ENCODE measurements at regions of chr2 and their contacts with region 1.

Region 1: DNA sequence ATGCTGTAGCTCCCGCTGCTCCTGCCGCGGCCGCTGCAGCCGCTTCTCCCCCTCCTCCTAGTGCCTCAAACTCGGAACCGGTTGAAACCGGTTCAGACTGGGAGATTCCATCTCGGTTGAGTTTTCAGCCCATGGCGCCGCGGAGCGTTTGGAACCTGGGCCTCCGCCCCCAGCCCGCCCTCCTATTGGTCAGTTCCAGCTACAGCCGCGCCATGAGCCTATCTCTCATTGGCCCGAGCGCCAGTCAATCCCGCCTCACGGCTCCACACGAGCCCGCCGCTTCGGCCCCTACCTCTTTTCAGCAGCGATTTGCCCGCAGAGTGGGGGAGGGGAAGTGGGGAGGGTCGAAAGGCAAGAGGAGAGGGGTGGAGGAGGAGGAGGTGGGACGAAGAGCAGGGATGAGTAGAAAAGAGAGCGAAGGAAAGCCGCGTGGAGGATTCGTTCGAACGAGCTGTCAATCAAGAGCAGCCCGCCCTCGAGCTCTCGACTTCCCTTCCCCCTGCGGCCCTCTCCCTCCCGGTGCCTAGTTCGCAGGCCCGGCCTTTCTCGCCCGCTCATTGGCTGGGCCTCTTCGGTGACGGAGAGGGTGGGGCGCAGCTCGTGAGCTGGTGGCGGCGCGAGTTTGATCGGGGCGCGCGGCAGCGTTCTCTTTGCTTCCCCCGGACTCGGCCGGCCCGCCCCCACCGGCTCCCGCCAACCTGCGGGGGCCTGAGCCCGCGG is at the start of gene XPO1:
- DNase-seq: peak; percentile 95 to 100 (median 99)
- ATAC-seq: peak; percentile 89
- H3K4me3 ChIP-seq: peak within 1 kb of the TSS; percentile 96
- H3K4me3 Mint-ChIP-seq: peak within 1 kb of the TSS; percentile 89 to 100 (median 98)
- H3K27ac ChIP-seq: peak within 1 kb of the TSS; percentile 98
- H3K27ac Mint-ChIP-seq: peak within 1 kb of the TSS; percentile 94 to 100 (median 99)
- H3K4me1 ChIP-seq: peaks cover 19 to 24% of the 10 kb centered on the region in 2 donors
- H3K4me1 Mint-ChIP-seq: peaks cover 24 to 43% (median 35%) of the 10 kb centered on the region in 7 donors
- H3K27me3 ChIP-seq: no peaks in the 10 kb centered on the region
- H3K27me3 Mint-ChIP-seq: peaks cover 0 to 8% (median 0%) of the 10 kb centered on the region in 5 donors
- total RNA-seq, gene XPO1: 132 to 192 (median 181) TPM

Region 2: DNA sequence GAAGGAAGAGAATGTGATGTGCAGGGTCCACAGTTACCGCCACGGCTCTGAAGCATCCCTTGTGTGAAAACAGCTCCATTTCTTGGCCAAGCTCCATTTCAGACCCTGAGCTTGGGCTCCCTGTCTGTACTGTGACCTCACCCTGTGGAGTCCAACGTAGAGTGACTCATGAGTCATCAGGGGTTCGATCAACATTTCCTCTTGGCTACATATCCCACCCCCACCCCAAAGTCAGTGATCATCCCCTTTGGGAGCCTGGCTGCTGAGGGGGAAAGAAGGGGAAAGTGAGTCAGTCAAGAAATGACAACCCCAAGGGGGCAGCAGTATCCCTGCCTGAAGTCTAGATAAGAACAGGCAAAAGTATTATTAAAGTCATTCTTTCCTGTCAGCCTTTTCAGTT is 720.1 kb before region 1 on chr2:
- CTCF ChIA-PET with region 1: no interaction called
- POLR2A ChIA-PET with region 1: no interaction called
- intact Hi-C with region 1: loop called in 1 of 2 experiments (anchors 1 kb)
- DNase-seq: peak in 2 of 9 donors; percentile 29 to 53
- ATAC-seq: no peak
- H3K4me3 ChIP-seq: no peak overlapping the region
- H3K4me3 Mint-ChIP-seq: peak overlapping the region in 2 of 10 donors; percentile 5 to 34
- H3K27ac ChIP-seq: no peak overlapping the region
- H3K27ac Mint-ChIP-seq: peak overlapping the region in 7 of 9 donors; percentile 28 to 92 (median 61)
- H3K4me1 ChIP-seq: peaks cover 24% of the 10 kb centered on the region in 2 donors
- H3K4me1 Mint-ChIP-seq: peaks cover 22 to 46% (median 37%) of the 10 kb centered on the region in 7 donors
- H3K27me3 ChIP-seq: no peaks in the 10 kb centered on the region
- H3K27me3 Mint-ChIP-seq: peaks cover 0 to 3% (median 0%) of the 10 kb centered on the region in 5 donors

Region 3: GRCh38 chr2:61144697-61145268 is 393.6 kb before region 1 on chr2:
- CTCF ChIA-PET with region 1: no interaction called
- POLR2A ChIA-PET with region 1: interaction called, 5 read pairs
- intact Hi-C with region 1: loop called in 1 of 2 experiments (anchors 2 kb)
- DNase-seq: peak; percentile 74 to 90 (median 86)
- ATAC-seq: peak; percentile 92
- H3K4me3 ChIP-seq: peak overlapping the region; percentile 82
- H3K4me3 Mint-ChIP-seq: peak overlapping the region; percentile 88 to 98 (median 94)
- H3K27ac ChIP-seq: peak overlapping the region; percentile 73
- H3K27ac Mint-ChIP-seq: peak overlapping the region; percentile 90 to 98 (median 95)
- H3K4me1 ChIP-seq: peaks cover 4 to 5% of the 10 kb centered on the region in 2 donors
- H3K4me1 Mint-ChIP-seq: peaks cover 0 to 18% (median 7%) of the 10 kb centered on the region in 7 donors
- H3K27me3 ChIP-seq: no peaks in the 10 kb centered on the region
- H3K27me3 Mint-ChIP-seq: peaks cover 0 to 2% (median 0%) of the 10 kb centered on the region in 5 donors

Region 4: GRCh38 chr2:61318553-61318952 is 219.8 kb before region 1 on chr2:
- CTCF ChIA-PET with region 1: no interaction called
- POLR2A ChIA-PET with region 1: no interaction called
- intact Hi-C with region 1: no loop called
- DNase-seq: no peak
- ATAC-seq: no peak
- H3K4me3 ChIP-seq: no peak overlapping the region
- H3K4me3 Mint-ChIP-seq: no peak overlapping the region
- H3K27ac ChIP-seq: no peak overlapping the region
- H3K27ac Mint-ChIP-seq: no peak overlapping the region
- H3K4me1 ChIP-seq: no peaks in the 10 kb centered on the region
- H3K4me1 Mint-ChIP-seq: peaks cover 0 to 4% (median 0%) of the 10 kb centered on the region in 7 donors
- H3K27me3 ChIP-seq: no peaks in the 10 kb centered on the region
- H3K27me3 Mint-ChIP-seq: no peaks in the 10 kb centered on the region

Region 5: DNA sequence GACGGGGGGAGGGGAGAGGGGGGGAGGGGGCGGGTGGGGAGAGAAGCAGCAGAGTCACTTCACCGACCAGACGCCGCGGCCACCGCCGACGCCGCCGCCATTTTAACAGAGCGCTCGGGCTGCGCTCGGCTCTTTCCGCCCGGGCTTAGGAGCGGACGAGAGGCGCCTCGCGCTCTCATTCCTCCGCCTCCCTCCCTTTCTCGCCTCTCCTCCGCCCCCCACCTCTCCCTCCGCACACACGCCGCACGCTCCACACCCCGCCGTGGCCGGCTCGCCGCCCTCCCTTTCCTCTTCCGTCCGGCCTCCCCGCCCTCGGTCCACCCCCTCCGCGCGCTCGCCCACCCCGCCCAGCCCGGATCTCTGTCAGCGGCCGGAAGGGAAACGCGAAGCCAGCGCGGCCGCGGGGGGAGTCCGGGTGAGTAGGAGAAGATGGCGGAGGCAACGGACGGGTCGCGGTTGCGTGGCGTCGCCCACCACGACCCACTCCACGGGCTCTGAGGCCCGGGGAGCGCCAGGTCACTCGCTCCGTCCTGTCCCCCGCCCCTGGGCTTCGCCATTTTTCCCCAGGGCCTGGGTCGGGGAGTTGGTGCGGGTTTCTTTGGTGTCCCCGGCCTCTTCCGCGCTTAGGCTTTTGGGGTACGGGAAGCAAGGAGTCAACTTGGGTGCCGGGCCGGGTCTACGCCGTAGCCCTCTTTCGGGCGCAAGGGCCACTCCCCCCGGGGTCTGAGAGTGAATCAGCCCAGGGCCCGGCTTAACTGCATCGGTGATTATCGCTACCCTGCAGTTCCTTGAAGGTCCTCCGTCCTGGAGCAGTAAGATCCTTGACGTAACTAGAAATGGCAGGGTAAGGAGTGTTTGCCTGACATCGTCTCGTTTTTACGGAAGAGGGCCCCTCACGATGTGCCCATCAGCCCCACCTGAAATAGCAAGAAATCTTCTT is 67.1 kb before region 1 on chr2 and contains the start of gene USP34:
- CTCF ChIA-PET with region 1: interaction called, 3 read pairs
- POLR2A ChIA-PET with region 1: interaction called, 13 read pairs
- intact Hi-C with region 1: loop called (anchors 1 kb)
- DNase-seq: peak; percentile 77 to 93 (median 88)
- ATAC-seq: peak; percentile 91
- H3K4me3 ChIP-seq: peak within 1 kb of the TSS; percentile 97
- H3K4me3 Mint-ChIP-seq: peak within 1 kb of the TSS; percentile 85 to 99 (median 96)
- H3K27ac ChIP-seq: peak within 1 kb of the TSS; percentile 98
- H3K27ac Mint-ChIP-seq: peak within 1 kb of the TSS; percentile 96 to 99 (median 97)
- H3K4me1 ChIP-seq: peaks cover 14 to 27% of the 10 kb centered on the region in 2 donors
- H3K4me1 Mint-ChIP-seq: peaks cover 11 to 45% (median 33%) of the 10 kb centered on the region in 7 donors
- H3K27me3 ChIP-seq: no peaks in the 10 kb centered on the region
- H3K27me3 Mint-ChIP-seq: no peaks in the 10 kb centered on the region
- total RNA-seq, gene USP34: 109 to 186 (median 165) TPM

Region 6: GRCh38 chr2:61694312-61695274 is 156.2 kb after region 1 on chr2:
- CTCF ChIA-PET with region 1: no interaction called
- POLR2A ChIA-PET with region 1: interaction called, 4 read pairs
- intact Hi-C with region 1: loop called (anchors 1 kb)
- DNase-seq: peak; percentile 62 to 91 (median 77)
- ATAC-seq: peak; percentile 99
- H3K4me3 ChIP-seq: peak overlapping the region; percentile 74
- H3K4me3 Mint-ChIP-seq: peak overlapping the region; percentile 84 to 96 (median 91)
- H3K27ac ChIP-seq: peak overlapping the region; percentile 62
- H3K27ac Mint-ChIP-seq: peak overlapping the region; percentile 74 to 92 (median 87)
- H3K4me1 ChIP-seq: peaks cover 0 to 5% of the 10 kb centered on the region in 2 donors
- H3K4me1 Mint-ChIP-seq: peaks cover 4 to 19% (median 15%) of the 10 kb centered on the region in 7 donors
- H3K27me3 ChIP-seq: no peaks in the 10 kb centered on the region
- H3K27me3 Mint-ChIP-seq: peaks cover 0 to 4% (median 0%) of the 10 kb centered on the region in 5 donors

Region 7: GRCh38 chr2:61888267-61889055 is 350.1 kb after region 1 on chr2 and contains the start of gene CCT4:
- CTCF ChIA-PET with region 1: no interaction called
- POLR2A ChIA-PET with region 1: interaction called, 3 read pairs
- intact Hi-C with region 1: loop called (anchors 1 kb)
- DNase-seq: peak; percentile 86 to 99 (median 95)
- ATAC-seq: peak; percentile 94
- H3K4me3 ChIP-seq: peak within 1 kb of the TSS; percentile 92
- H3K4me3 Mint-ChIP-seq: peak within 1 kb of the TSS; percentile 85 to 100 (median 99)
- H3K27ac ChIP-seq: peak within 1 kb of the TSS; percentile 98
- H3K27ac Mint-ChIP-seq: peak within 1 kb of the TSS; percentile 98 to 100 (median 100)
- H3K4me1 ChIP-seq: peaks cover 15 to 17% of the 10 kb centered on the region in 2 donors
- H3K4me1 Mint-ChIP-seq: peaks cover 11 to 34% (median 29%) of the 10 kb centered on the region in 7 donors
- H3K27me3 ChIP-seq: no peaks in the 10 kb centered on the region
- H3K27me3 Mint-ChIP-seq: no peaks in the 10 kb centered on the region
- total RNA-seq, gene CCT4: 84.2 to 177 (median 90.3) TPM

Measured in naive thymus-derived CD4-positive, alpha-beta T cell (primary cell).